ENCODE measurements at regions of chr16 and their contacts with region 1.

Region 1: DNA sequence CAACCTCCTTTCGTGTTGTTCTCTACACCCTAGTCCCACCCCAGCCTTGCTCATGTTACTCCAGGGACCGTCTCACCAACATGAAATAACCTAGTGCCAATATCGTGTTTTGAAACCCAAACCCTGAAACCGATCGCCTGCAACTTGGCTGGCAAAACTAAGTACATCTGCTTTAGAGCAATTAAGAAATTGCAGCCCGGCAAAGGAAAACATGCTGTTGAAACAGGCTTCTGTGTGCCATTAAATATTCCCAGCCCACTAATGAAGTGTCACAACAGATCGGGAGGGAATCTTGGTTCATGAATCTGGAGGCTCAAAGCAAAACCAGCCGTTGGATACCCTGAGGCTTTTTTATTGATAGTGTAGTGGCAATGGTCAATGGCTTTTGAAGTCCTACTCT is 48.3 kb upstream of the GPR139 start:
- DNase-seq: no peak
- H3K4me3 ChIP-seq: no peak overlapping the region
- H3K27ac ChIP-seq: no peak overlapping the region
- H3K4me1 ChIP-seq: no peaks in the 10 kb centered on the region
- H3K27me3 ChIP-seq: peaks cover 0 to 4% (median 0%) of the 10 kb centered on the region in 7 donors
- CTCF ChIP-seq: no peak
- POLR2A ChIP-seq: no peak

Region 2: DNA sequence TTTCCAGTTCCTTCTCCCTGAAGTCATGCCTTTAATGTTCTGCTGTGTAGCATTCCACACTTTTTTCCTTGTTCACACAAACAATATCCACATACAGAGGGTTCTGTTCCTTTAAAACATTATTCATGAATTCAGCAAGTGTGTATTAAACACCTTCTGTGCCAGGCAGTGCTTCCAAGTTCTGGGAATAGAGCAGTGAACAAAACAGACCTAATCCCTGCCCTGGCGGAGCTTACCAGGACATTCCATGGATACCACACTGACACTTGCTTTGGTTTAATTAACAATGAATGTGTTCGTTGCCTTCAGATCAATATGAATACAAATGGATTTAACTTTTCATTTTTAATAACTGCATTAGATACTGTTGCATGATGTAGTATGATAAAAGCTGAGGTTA is 894.4 kb before region 1 on chr16:
- intact Hi-C with region 1: no loop called
- DNase-seq: no peak
- H3K4me3 ChIP-seq: no peak overlapping the region
- H3K27ac ChIP-seq: no peak overlapping the region
- H3K4me1 ChIP-seq: no peaks in the 10 kb centered on the region
- H3K27me3 ChIP-seq: no peaks in the 10 kb centered on the region
- CTCF ChIP-seq: no peak
- POLR2A ChIP-seq: no peak

Region 3: DNA sequence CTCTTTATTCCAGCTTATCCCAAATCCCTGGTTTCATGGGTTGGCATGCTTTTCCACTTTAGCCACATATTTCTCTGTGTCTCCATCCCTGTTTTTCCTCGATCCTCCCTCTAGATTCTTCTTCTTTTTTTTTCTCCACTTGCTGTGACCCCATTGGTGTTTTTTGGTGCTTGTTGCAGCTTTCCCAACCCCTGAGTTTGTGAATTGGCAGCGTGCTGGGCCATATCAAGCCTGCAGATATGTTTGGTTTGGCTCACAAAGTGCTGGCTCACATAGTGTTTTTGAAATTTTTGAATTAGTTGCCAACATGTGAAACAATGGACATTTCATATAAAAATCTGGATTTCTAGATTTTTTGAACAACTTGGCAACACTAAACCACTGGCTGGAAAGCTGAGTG is 57.1 kb before region 1 on chr16:
- intact Hi-C with region 1: loop called (anchors 10 kb)
- DNase-seq: no peak
- H3K4me3 ChIP-seq: no peak overlapping the region
- H3K27ac ChIP-seq: no peak overlapping the region
- H3K4me1 ChIP-seq: no peaks in the 10 kb centered on the region
- H3K27me3 ChIP-seq: peaks cover 0 to 11% (median 0%) of the 10 kb centered on the region in 7 donors
- CTCF ChIP-seq: no peak
- POLR2A ChIP-seq: no peak

Region 4: DNA sequence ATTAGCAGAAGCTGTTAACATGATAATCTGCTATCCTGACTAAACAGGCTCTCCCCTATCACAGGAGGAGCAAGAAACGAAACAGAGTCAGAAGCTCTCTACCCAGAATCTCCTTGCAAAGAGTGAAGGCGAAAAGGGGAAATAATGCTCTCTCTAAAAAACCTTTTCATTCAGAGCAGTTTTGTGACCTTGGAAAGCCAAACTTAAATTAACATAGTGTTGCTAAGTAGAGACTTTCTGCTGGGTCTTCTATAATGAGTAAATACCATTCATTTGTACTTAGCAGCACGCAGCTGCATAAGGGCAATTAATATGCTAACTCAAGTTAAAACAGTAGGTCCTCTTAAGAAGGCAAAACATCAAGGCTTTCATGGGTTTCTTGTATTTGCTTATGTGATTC is 53.3 kb after region 1 on chr16:
- intact Hi-C with region 1: no loop called
- DNase-seq: no peak
- H3K4me3 ChIP-seq: no peak overlapping the region
- H3K27ac ChIP-seq: no peak overlapping the region
- H3K4me1 ChIP-seq: no peaks in the 10 kb centered on the region
- H3K27me3 ChIP-seq: peaks cover 0 to 23% (median 0%) of the 10 kb centered on the region in 7 donors
- CTCF ChIP-seq: no peak
- POLR2A ChIP-seq: no peak

Measured in spleen (tissue), 13 donors.